ENCODE measurements at regions of chr15 and their contacts with region 1.

Region 1: DNA sequence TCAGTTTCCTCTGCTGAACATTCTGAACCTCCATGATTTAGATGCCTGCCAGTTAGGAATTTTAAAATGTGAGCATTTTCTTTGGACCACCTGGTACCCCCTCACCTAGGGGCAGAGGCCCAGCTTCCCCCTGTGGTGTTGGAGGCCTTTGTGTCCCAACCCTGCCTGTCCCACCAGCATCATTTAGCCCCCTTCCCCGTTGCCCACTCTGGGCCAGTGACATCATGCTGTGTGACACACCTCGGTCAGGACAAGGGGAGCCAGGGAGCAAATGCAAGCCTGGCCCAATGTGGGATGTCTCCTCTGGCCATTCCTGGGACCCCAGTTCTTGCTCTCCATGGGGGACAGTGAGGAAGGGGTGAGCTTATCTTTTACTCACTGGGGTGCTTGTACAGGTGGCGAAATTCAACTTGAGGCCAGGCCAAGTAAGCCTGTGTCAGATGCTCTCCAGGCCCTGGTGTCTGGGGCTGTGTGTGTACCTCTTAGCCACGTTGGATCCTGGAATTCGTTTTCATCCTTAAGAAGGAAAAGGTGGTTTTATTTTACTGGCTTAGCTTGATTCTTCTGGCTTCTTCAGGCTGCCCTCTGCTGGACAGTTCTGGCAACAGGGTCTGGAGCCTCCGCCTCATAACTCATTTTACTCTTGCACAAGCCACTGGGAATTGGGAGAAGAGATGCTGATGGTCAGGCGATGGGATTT is 49.7 kb upstream of the MYZAP start:
- DNase-seq: peak; percentile 18
- H3K4me3 ChIP-seq: no peak overlapping the region
- H3K27me3 ChIP-seq: no peaks in the 10 kb centered on the region; the same call in none of the 2 replicates
- CTCF ChIP-seq: peak; percentile 92

Region 2: GRCh38 chr15:57432141-57432741 is 109.7 kb before region 1 on chr15:
- CTCF ChIA-PET with region 1: no interaction called
- POLR2A ChIA-PET with region 1: no interaction called
- DNase-seq: no peak
- H3K4me3 ChIP-seq: no peak overlapping the region
- H3K27me3 ChIP-seq: no peaks in the 10 kb centered on the region; the same call in 1 of the 2 replicates
- CTCF ChIP-seq: no peak

Region 3: GRCh38 chr15:57551717-57552677 is 10.0 kb after region 1 on chr15:
- CTCF ChIA-PET with region 1: interaction called, 33 read pairs
- POLR2A ChIA-PET with region 1: no interaction called
- DNase-seq: peak; percentile 52
- H3K4me3 ChIP-seq: no peak overlapping the region
- H3K27me3 ChIP-seq: no peaks in the 10 kb centered on the region
- CTCF ChIP-seq: no peak

Region 4: DNA sequence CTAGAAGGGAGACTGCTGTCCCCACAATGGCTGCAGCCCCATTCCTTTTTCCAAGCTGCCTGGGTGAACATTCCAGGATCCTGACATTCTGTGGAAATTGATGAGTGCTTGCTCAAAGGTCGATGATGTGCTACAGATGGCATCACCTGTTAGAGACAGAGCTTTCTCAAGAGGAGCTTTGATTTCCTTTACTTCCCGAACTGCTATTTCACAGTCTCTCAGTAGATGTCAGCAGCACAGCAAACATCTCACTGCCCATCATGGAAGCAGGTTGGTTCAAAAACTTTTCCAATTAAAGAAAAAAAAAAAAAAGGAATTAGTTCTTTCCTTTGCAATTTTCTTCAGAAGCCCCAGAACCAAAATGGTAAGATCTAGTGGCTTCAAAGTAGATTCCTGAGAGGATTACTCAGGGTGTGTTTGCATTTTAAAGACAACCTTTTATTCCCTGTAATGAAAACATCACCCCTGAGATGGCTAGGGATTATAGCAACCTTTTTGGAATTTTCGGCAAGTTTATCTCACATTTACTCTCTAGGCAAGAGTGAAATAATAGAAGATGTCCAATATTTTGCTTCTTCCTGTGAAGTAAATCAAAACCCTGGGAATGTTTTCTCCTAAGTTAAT is 209.3 kb after region 1 on chr15:
- CTCF ChIA-PET with region 1: no interaction called
- POLR2A ChIA-PET with region 1: no interaction called
- DNase-seq: no peak
- H3K4me3 ChIP-seq: no peak overlapping the region
- H3K27me3 ChIP-seq: no peaks in the 10 kb centered on the region
- CTCF ChIP-seq: peak; percentile 77

Measured in BJ (cell line).